Activated B cell treated with CpG ODN at 0.5 μM for 24 hours (primary cell): ENCODE measurements at regions of chr14 and their contacts with region 1.

Region 1: DNA sequence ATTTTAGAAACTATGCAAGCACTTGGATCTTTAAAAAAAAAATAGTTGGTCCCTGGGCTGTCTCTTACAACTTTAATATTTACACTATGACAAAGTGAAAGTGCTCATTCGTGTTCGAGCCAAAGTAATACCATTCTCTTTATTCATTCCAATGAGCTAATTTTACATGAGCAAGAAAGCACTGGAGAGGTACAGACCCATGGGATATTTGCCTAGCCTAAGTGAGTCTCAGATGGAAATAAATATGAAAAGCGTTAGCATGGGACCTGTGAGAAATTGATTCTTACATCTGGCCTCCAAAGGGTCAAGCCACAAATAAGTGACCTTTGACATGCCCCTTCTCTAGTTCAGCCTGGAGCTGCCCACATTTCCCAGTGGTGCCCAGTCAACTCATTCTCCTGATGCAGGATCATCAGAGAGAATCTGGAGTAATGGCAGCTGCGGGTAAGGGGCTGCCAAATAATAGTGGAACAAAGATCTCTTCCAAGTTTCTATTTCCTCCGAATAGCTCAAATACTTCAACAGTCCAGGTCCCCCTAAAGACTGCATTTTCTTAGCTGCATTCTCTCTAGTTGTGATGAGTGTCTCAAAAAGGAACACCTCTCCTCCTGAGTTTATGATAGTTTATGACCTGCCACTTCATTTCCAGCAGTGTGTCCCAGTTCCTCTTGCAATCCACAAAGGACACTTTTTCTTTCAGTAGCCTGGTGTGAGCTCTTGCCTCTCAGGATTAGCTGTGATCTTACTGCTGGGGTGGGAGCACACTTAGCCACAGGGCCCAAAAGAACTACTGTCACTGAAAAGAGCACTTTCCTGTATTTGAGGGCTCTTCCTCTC is 208.2 kb downstream of the DAD1 start:
- DNase-seq: no peak
- ATAC-seq: no peak
- H3K4me3 Mint-ChIP-seq: no peak overlapping the region
- H3K27ac Mint-ChIP-seq: peak overlapping the region; percentile 31
- H3K4me1 Mint-ChIP-seq: peaks cover 59% of the 10 kb centered on the region
- H3K27me3 Mint-ChIP-seq: no peaks in the 10 kb centered on the region
- CTCF ChIP-seq: no peak

Region 2: DNA sequence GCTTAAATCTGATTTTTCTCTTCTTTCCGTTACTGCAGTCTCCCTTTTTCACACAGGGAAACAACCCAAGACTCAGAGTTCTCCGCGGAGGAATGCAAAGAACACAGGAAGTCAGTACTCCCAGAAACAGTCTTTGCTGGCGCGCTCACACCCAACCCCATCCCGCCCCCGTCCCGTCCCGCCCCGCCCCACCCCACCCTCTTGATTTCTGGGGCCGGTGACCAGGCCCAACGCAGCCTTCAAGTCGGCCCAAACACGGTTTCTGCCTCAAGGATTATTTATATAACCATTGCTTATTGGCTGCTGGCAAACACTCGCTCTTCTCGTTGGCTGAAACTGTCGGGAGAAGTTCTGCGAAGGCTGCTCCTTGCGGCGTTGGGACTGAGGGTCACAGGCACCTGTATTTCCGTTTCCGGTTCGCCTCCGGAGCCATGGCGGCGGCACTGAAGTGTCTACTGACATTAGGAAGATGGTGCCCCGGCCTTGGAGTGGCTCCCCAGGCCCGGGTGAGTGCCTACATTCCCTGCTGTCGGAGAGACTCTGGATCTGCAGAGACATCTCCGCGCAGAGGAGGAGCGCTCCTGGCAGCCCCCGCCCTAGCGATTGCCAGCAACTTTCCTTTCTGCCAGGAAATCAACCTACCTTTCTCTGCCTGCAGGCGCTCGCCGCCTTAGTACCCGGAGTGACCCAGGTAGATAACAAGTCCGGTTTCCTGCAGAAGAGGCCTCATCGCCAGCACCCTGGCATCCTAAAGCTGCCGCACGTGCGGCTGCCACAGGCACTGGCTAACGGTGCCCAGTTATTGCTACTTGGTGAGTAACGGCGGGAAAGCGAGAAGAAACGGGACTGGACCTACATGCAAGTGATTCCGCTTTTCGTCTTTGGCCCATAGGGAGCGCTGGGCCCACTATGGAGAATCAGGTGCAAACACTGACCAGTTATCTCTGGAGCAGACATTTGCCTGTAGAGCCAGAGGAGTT is 1390.9 kb before region 1 on chr14 and contains the start of gene METTL17:
- CTCF ChIA-PET with region 1: no interaction called
- POLR2A ChIA-PET with region 1: no interaction called
- intact Hi-C with region 1: no loop called
- DNase-seq: peak; percentile 68
- ATAC-seq: peak; percentile 97
- H3K4me3 Mint-ChIP-seq: peak within 1 kb of the TSS; percentile 94
- H3K27ac Mint-ChIP-seq: peak within 1 kb of the TSS; percentile 89
- H3K4me1 Mint-ChIP-seq: peaks cover 31% of the 10 kb centered on the region
- H3K27me3 Mint-ChIP-seq: no peaks in the 10 kb centered on the region
- CTCF ChIP-seq: no peak
- total RNA-seq, gene METTL17: 94.2 and 94.7 TPM in 2 replicates

Region 3: DNA sequence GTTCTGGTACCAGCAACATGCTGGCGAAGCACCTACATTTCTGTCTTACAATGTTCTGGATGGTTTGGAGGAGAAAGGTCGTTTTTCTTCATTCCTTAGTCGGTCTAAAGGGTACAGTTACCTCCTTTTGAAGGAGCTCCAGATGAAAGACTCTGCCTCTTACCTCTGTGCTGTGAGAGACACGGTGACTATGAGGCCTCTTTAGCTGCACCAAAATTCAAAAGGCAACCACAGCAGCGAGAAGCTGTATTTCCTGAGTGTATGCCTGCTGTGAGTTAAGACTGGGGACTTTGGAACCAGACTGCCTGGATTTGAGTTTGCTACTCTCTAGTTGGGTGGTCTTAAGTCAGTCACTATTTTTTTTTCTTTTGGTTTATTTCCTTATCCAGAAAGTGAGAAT is 737.4 kb before region 1 on chr14:
- CTCF ChIA-PET with region 1: no interaction called
- POLR2A ChIA-PET with region 1: interaction called, 10 read pairs
- intact Hi-C with region 1: no loop called
- DNase-seq: no peak
- ATAC-seq: no peak
- H3K4me3 Mint-ChIP-seq: no peak overlapping the region
- H3K27ac Mint-ChIP-seq: no peak overlapping the region
- H3K4me1 Mint-ChIP-seq: no peaks in the 10 kb centered on the region
- H3K27me3 Mint-ChIP-seq: peaks cover 1% of the 10 kb centered on the region
- CTCF ChIP-seq: no peak